ENCODE measurements at regions of chr17 and their contacts with region 1.

Region 1: GRCh38 chr17:38967290-38967738 is at the start of gene FBXO47:
- DNase-seq: no peak
- ATAC-seq: peak; percentile 99
- H3K4me3 ChIP-seq: peak within 1 kb of the TSS; percentile 34 to 66
- H3K27ac ChIP-seq: peak within 1 kb of the TSS; percentile 71
- H3K4me1 ChIP-seq: peaks cover 6% of the 10 kb centered on the region
- H3K27me3 ChIP-seq: no peaks in the 10 kb centered on the region
- CTCF ChIP-seq: no peak
- total RNA-seq, gene FBXO47: not detected

Region 2: GRCh38 chr17:39036014-39036413 is 68.7 kb after region 1 on chr17:
- CTCF ChIA-PET with region 1: interaction called, 13 read pairs
- POLR2A ChIA-PET with region 1: no interaction called
- in situ Hi-C with region 1: no loop called
- intact Hi-C with region 1: no loop called
- DNase-seq: no peak
- ATAC-seq: no peak
- H3K4me3 ChIP-seq: no peak overlapping the region
- H3K27ac ChIP-seq: no peak overlapping the region
- H3K4me1 ChIP-seq: no peaks in the 10 kb centered on the region
- H3K27me3 ChIP-seq: no peaks in the 10 kb centered on the region
- CTCF ChIP-seq: no peak

Measured in Panc1 (cell line).